IMR-90 (cell line): ENCODE measurements at regions of chr1 and their contacts with region 1.

Region 1: DNA sequence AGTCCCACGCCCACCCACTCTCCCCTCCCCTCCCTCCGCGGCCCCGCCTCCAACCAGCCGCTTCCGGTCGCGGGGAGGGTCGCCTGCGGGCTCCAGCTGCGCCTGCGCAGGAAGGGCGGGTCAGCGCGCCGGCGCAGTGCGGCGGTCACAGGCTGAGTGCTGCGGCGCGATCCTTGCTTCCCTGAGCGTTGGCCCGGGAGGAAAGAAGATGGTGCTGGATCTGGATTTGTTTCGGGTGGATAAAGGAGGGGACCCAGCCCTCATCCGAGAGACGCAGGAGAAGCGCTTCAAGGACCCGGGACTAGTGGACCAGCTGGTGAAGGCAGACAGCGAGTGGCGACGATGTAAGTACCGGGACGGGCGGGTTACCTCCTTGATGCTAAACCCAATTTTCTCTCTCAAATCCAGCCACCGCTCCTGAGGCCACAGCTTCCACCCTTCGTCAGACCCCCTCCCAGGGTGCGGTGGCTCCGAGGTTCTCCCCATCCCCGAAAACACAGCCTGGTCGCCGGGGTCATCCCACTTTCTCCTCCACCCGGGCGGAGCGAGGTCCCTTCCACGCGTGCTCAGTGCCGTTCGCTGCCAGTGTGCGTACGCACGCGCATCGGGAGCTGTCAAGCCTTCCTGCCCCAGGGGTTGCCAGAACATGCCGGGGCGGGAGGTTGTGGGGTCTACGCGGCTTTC is at the start of gene SARS1:
- DNase-seq: peak; percentile 80
- ATAC-seq: peak; percentile 90
- H3K4me3 ChIP-seq: peak within 1 kb of the TSS; percentile 73
- H3K27ac ChIP-seq: peak within 1 kb of the TSS; percentile 86
- H3K4me1 ChIP-seq: peaks cover 8% of the 10 kb centered on the region
- H3K27me3 ChIP-seq: no peaks in the 10 kb centered on the region
- CTCF ChIP-seq: no peak
- POLR2A ChIP-seq: peak; percentile 90
- RAD21 ChIP-seq: no peak; the same call in 1 of the 2 replicates
- total RNA-seq, gene SARS1: 348 and 373 TPM in 2 replicates

Region 2: GRCh38 chr1:109229531-109230127 is 15.7 kb after region 1 on chr1:
- CTCF ChIA-PET with region 1: interaction called, 7 read pairs
- POLR2A ChIA-PET with region 1: no interaction called
- dilution Hi-C with region 1: no loop called
- in situ Hi-C with region 1: no loop called
- intact Hi-C with region 1: loop called (anchors 2 kb)
- DNase-seq: no peak
- ATAC-seq: no peak
- H3K4me3 ChIP-seq: no peak overlapping the region
- H3K27ac ChIP-seq: no peak overlapping the region; the same call in 1 of the 2 replicates
- H3K4me1 ChIP-seq: peaks cover 17% of the 10 kb centered on the region
- H3K27me3 ChIP-seq: no peaks in the 10 kb centered on the region
- CTCF ChIP-seq: no peak
- POLR2A ChIP-seq: no peak
- RAD21 ChIP-seq: no peak

Region 3: DNA sequence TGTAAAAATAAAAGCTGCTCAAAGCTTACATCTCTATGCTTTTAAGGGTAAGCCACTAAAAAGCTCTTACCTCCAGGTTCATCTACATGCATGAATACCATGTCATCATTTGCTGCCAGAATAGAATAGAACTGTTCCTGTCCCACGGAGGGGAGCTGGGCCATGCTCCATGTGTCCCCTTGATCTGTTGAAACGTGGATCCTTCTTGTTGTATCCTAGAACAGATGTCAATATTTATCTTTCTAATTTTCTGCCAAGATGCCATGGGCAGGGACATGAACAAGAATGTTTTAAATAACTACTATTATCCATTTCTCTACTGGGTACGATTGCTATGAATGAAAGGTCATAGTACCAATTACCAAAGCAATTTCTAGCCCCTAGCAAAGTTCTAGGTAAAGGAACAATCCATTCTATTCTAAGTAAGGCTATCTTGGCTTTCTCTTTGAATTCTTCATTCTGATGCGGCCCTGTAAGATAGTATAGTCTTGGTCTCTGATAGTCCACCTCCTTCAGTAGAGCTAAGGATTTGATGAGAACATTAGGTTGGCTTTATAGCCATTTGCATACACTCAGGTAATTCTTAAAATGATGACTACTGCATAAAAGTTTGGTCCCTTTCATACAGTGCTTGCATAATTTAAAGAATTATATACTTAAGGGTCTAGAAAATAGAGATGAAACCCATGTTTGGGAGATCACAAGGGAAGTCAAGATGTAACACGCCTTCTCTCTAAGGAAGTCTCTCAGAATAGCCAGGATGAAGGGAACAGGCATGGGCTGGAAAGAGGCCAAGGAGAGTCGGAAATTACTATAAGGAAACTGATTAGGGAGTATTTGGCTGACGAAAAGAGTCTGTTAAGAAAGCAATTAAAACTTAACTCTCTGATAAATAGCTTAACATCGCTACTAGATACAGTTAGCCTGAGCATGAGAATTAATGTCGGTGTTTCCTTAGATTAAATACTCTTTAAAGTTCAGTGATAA is 128.3 kb after region 1 on chr1:
- CTCF ChIA-PET with region 1: no interaction called
- POLR2A ChIA-PET with region 1: no interaction called
- dilution Hi-C with region 1: loop called (anchors 25 kb)
- in situ Hi-C with region 1: no loop called
- intact Hi-C with region 1: no loop called
- DNase-seq: no peak
- ATAC-seq: no peak
- H3K4me3 ChIP-seq: no peak overlapping the region
- H3K27ac ChIP-seq: no peak overlapping the region
- H3K4me1 ChIP-seq: no peaks in the 10 kb centered on the region
- H3K27me3 ChIP-seq: no peaks in the 10 kb centered on the region
- CTCF ChIP-seq: no peak
- POLR2A ChIP-seq: no peak
- RAD21 ChIP-seq: no peak

Region 4: GRCh38 chr1:109466452-109467300 is 252.7 kb after region 1 on chr1 and contains the start of gene SYPL2:
- CTCF ChIA-PET with region 1: no interaction called
- POLR2A ChIA-PET with region 1: no interaction called
- dilution Hi-C with region 1: no loop called
- in situ Hi-C with region 1: no loop called
- intact Hi-C with region 1: no loop called
- DNase-seq: peak; percentile 12
- ATAC-seq: peak; percentile 81
- H3K4me3 ChIP-seq: peak within 1 kb of the TSS; percentile 57
- H3K27ac ChIP-seq: no peak within 1 kb of the TSS
- H3K4me1 ChIP-seq: no peaks in the 10 kb centered on the region
- H3K27me3 ChIP-seq: peaks cover 64% of the 10 kb centered on the region
- CTCF ChIP-seq: no peak
- POLR2A ChIP-seq: no peak
- RAD21 ChIP-seq: no peak
- total RNA-seq, gene SYPL2: under 0.01 TPM in 2 replicates